IMR-90 (cell line): ENCODE measurements at regions of chrX and their contacts with region 1.

Region 1: GRCh38 chrX:27186664-27187063 is 276.5 kb downstream of the PPP4R3C start:
- DNase-seq: peak; percentile 28
- ATAC-seq: no peak
- H3K4me3 ChIP-seq: no peak overlapping the region
- H3K27ac ChIP-seq: no peak overlapping the region
- H3K4me1 ChIP-seq: no peaks in the 10 kb centered on the region
- H3K27me3 ChIP-seq: no peaks in the 10 kb centered on the region
- CTCF ChIP-seq: peak; percentile 61
- POLR2A ChIP-seq: no peak
- RAD21 ChIP-seq: peak; percentile 55

Region 2: GRCh38 chrX:25523574-25524540 is 1662.8 kb before region 1 on chrX:
- CTCF ChIA-PET with region 1: no interaction called
- POLR2A ChIA-PET with region 1: no interaction called
- dilution Hi-C with region 1: no loop called
- in situ Hi-C with region 1: no loop called
- intact Hi-C with region 1: loop called (anchors 5 kb)
- DNase-seq: peak; percentile 36
- ATAC-seq: peak; percentile 56; the same call in 1 of the 2 replicates
- H3K4me3 ChIP-seq: no peak overlapping the region
- H3K27ac ChIP-seq: no peak overlapping the region
- H3K4me1 ChIP-seq: no peaks in the 10 kb centered on the region
- H3K27me3 ChIP-seq: no peaks in the 10 kb centered on the region
- CTCF ChIP-seq: peak; percentile 42
- POLR2A ChIP-seq: no peak
- RAD21 ChIP-seq: peak; percentile 57

Region 3: DNA sequence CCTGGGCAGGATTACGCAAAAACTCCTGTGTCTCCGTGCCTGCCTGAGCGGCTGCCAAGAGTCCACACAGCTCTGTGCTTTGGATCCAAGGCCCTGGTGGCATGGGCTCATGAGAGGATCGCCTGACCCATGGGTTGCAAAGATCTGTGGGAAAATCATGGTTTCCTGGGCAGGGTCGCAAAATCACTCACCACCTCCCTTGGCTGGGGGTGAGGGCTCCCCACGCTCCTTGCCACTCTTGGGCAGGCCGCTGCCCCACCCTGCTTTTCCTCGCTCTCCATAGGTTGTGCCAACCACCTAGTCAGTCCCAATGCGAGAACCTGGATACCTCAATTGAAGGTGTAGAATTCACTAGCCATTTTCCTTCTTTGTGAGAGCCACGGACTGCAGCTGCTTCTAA is 1115.0 kb before region 1 on chrX:
- CTCF ChIA-PET with region 1: no interaction called
- POLR2A ChIA-PET with region 1: no interaction called
- dilution Hi-C with region 1: no loop called
- in situ Hi-C with region 1: no loop called
- intact Hi-C with region 1: no loop called
- DNase-seq: no peak
- ATAC-seq: no peak
- H3K4me3 ChIP-seq: no peak overlapping the region
- H3K27ac ChIP-seq: no peak overlapping the region
- H3K4me1 ChIP-seq: no peaks in the 10 kb centered on the region
- H3K27me3 ChIP-seq: no peaks in the 10 kb centered on the region
- CTCF ChIP-seq: no peak
- POLR2A ChIP-seq: no peak
- RAD21 ChIP-seq: no peak

Region 4: DNA sequence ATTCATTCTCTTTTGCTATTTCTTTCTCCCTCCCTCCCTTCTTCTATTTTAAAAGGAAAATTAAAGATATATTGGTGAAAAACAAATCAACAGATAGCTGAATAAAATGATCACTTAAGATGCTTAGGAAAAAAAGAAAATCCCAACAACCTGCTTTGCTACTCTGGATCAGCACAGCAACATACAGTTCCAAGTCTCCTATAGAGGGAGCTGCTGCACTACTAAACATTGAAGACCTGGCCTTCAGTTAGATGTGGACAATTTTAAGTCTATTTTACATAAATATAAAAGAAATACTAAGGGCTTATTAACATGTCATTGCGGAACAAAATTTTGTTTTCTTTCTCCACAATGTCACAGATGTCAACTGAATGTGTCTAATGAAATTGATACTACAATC is 744.3 kb before region 1 on chrX:
- CTCF ChIA-PET with region 1: no interaction called
- POLR2A ChIA-PET with region 1: no interaction called
- dilution Hi-C with region 1: no loop called
- in situ Hi-C with region 1: loop called (anchors 10 kb)
- intact Hi-C with region 1: loop called (anchors 1 kb)
- DNase-seq: peak; percentile 26
- ATAC-seq: peak; percentile 67; the same call in 1 of the 2 replicates
- H3K4me3 ChIP-seq: no peak overlapping the region
- H3K27ac ChIP-seq: no peak overlapping the region
- H3K4me1 ChIP-seq: no peaks in the 10 kb centered on the region
- H3K27me3 ChIP-seq: no peaks in the 10 kb centered on the region
- CTCF ChIP-seq: peak; percentile 51
- POLR2A ChIP-seq: no peak
- RAD21 ChIP-seq: peak; percentile 54

Region 5: GRCh38 chrX:26651755-26652154 is 534.9 kb before region 1 on chrX:
- CTCF ChIA-PET with region 1: no interaction called
- POLR2A ChIA-PET with region 1: no interaction called
- dilution Hi-C with region 1: no loop called
- in situ Hi-C with region 1: loop called (anchors 25 kb)
- intact Hi-C with region 1: loop called (anchors 10 kb)
- DNase-seq: no peak
- ATAC-seq: no peak
- H3K4me3 ChIP-seq: no peak overlapping the region
- H3K27ac ChIP-seq: no peak overlapping the region
- H3K4me1 ChIP-seq: no peaks in the 10 kb centered on the region
- H3K27me3 ChIP-seq: no peaks in the 10 kb centered on the region
- CTCF ChIP-seq: no peak; the same call in 1 of the 2 replicates
- POLR2A ChIP-seq: no peak
- RAD21 ChIP-seq: peak; percentile 24; the same call in 1 of the 2 replicates

Region 6: DNA sequence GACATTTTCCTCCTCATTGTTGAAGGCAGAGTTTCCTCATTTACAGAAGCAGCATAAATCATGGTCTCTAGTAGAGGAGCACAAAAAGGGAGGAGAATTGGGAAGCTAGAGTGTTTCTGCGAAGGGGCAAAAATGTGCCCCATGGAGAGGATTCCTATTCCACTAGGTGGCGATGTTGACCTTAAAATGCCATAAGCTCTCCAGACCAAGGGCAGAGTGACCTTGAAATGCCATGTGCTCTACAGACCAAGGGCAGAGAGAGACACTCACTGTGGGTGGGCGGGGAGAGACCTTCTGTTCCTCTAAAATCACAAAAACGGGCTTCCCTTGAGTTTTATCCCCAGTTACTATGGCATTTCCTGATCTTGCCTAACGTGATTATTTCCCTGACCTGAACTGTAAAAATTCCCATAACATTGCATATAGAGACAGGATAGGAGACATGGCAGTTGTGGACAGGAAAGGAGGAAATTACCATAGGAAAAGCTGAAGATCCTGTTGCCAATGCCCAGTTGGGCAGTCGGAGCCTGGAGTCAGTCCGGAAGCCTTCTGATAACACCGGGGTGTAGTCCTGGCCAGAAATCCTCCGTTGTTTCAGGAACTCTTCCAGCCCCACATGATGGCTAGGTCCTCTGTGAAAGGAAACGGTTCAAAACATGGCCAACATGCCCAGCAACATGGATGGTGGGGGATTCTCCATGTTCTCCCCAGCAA is 403.0 kb before region 1 on chrX:
- CTCF ChIA-PET with region 1: no interaction called
- POLR2A ChIA-PET with region 1: no interaction called
- dilution Hi-C with region 1: no loop called
- in situ Hi-C with region 1: no loop called
- intact Hi-C with region 1: loop called (anchors 5 kb)
- DNase-seq: peak; percentile 11
- ATAC-seq: no peak
- H3K4me3 ChIP-seq: no peak overlapping the region
- H3K27ac ChIP-seq: no peak overlapping the region
- H3K4me1 ChIP-seq: no peaks in the 10 kb centered on the region
- H3K27me3 ChIP-seq: no peaks in the 10 kb centered on the region
- CTCF ChIP-seq: peak; percentile 37
- POLR2A ChIP-seq: no peak
- RAD21 ChIP-seq: peak; percentile 46; the same call in 1 of the 2 replicates

Region 7: DNA sequence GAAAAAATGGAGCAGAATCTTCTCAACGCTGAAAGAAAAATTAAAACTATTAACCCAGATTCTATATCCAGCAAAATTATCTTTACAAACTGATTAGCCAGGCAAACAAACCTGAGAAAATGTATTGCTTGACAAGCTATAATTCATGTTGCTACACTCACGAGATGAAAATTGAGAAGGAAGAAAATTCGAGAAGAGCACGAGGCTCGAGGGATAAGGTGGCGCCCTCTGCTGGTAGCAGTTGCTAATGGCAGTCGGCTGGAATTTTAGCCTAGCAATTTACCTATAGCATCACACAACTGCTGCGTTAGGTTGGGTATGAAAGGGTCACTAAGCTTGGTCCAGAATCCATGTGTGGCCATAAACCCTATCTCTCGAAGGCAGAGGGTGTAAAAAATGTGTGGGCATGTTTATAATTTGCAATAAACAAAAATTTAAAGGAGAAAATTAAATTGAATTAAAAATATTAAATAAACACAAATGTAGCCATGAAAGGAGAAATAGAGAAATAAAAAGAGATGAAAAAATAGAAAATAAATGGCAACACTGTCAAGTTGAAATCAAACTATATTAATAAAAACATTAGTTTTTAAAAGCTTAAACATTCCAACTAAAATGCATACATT is 149.9 kb after region 1 on chrX:
- CTCF ChIA-PET with region 1: no interaction called
- POLR2A ChIA-PET with region 1: no interaction called
- dilution Hi-C with region 1: no loop called
- in situ Hi-C with region 1: no loop called
- intact Hi-C with region 1: no loop called
- DNase-seq: peak; percentile 2
- ATAC-seq: no peak
- H3K4me3 ChIP-seq: no peak overlapping the region
- H3K27ac ChIP-seq: no peak overlapping the region
- H3K4me1 ChIP-seq: no peaks in the 10 kb centered on the region
- H3K27me3 ChIP-seq: no peaks in the 10 kb centered on the region
- CTCF ChIP-seq: peak; percentile 59
- POLR2A ChIP-seq: no peak
- RAD21 ChIP-seq: peak; percentile 22; the same call in 1 of the 2 replicates